ENCODE measurements at regions of chr9 and their contacts with region 1.

Region 1: DNA sequence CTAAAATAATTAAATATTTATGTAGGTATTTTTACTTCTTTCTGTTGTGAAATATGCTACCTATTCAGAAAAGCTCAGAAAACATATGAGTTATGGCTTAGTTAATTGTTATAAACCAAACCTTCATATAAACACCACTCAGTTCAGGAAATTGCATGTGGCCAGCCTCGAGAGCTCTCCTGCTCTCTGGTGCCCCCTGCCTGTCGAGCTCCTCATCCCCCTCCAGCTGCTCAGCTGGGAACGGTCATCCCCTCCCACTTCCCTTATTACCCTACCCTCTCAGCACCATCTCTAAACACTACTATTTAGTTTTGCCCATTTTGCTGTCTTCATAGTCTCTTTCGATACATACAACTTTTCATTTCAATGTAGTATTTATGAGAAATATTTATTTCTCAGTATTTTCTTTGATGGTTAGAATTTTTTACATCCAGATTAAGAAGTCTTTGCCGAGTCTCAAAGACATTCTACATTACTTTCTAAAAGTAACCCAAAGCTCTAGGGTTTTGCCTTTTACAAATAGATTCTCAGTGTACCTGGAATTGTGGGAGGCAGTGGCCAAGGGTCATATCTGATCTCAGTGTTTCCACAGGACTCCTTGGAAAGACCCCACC is 51.2 kb upstream of the SEMA4D start:
- DNase-seq: peak; percentile 43 to 95 (median 82)

Region 2: DNA sequence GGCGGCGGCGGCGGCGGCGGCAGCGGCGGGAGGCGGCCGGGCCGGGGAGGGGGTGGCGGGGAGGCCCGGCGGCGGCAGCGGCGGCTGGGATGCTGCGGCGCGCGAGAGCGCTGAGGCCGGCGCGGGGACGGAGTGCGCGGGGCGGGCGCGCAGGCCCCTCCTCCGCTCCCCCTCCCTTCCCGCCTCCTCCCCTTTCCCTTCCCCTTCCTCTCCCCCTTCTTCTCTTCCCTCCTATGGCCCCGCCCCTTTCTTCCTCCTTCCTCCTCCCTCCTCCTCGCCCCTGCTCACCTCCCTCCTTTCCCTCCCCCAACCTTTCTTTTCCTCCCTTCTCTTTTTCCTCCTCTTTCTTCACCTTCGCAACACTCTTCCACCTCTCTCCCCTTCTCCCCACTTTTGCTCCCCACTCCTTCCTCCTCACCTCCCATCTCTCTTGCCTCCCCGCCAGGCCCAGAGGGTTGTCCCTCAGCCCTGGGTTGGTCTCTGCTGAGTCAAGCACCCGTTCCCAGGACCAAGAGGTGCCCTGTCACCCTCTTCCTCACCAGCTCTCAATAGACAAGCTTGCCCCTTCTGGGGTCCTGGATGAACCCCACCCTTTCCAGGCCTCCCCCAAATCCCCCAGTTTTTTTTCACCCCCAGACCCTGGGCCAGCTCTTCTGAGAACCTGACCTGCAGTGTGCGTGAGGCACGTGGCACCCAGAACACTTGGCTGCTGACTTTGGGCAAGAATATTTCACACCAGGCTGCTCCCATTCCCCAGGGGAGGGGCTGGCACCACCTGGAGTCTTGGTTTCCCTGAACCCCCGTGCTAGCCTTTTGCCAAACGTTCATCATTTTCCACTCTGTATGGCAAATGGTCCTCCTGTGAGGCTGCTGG is 50.9 kb before region 1 on chr9 and contains the start of gene SEMA4D:
- intact Hi-C with region 1: loop called (anchors 10 kb)
- DNase-seq: peak; percentile 56 to 95 (median 84)